ENCODE measurements at regions of chr5 and their contacts with region 1.

Region 1: DNA sequence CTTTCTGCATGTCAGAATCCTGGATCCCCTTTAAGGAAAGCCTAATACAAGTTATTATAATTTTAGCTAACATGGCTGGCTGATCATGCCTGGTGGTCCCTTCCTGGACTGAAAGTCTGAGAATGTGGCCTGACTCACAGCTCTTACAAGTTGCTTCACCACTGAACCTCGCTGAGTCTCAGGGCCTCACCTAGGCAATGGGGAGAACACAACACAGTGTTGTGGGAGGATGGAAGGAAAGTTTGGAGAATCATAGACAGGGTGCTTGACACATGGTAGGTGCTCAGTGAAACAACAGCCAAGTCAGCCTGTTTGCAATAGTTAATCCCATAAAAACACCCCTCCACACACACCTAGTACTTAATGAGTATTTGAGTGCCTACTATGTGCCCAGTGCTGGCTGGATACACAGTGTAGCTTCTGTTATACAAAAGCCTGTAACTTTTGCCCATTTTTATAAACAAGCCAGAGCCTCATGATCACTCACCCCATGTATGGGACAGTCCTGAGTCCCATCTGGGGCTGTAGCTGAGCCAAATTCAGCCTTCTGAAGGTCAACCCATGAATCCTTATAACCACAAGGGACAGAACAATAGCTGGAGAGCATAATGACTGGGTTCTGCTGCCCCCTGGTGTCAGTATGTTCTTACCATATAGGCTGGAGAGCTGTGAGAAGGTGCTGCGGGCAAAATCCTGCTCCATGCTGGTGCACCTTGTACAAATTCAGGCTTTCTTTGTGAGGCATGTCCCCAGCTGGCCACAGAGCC is 3.9 kb downstream of the ACSL6 start:
- DNase-seq: peak; percentile 89 to 92 (median 89)
- ATAC-seq: peak; percentile 56
- H3K4me3 ChIP-seq: no peak overlapping the region
- H3K27ac ChIP-seq: no peak overlapping the region
- H3K4me1 ChIP-seq: peaks cover 20% of the 10 kb centered on the region
- H3K27me3 ChIP-seq: no peaks in the 10 kb centered on the region
- CTCF ChIP-seq: peak; percentile 65 to 88 (median 87)
- POLR2A ChIP-seq: no peak

Region 2: DNA sequence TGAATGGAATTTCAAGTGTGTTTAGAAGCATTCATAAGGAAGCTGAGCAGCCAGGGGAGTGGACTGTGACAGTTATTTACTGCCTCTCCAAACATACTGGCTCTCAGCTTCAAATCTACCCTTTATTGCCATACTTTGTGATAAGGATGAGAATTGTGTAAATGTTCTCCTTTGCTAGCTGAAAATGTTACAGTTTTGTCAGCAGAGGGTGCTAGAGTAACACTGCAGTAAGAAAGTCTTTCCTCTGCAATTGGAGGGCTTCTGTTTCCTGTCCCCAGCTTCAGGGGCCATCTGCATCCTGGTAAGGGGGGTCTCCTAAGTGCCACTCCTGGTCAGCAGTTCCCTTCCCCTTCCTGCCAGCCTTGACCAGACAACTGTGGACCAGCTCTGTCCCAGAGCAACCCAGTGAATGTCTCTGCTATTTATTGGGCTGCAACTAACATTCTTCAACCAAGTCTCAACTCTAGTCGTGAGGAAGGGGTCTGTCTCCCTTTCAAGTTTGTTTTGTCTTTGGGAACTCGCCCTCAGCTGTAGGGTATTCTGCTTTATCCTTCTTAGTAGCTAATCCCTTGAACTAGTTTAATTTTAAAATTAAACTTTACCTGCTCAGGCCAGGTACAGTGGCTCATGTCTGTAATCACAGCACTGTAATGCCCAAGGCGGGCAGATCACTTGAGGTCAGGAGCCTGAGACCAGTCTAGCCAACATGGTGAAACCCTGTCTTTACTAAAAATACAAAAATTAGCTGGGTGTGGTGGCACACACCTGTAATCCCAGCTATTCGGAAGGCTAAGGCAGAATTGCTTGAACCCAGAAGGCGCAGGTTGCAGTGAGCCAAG is 417.9 kb before region 1 on chr5:
- intact Hi-C with region 1: loop called (anchors 5 kb)
- DNase-seq: peak in 1 of 4 donors; percentile 13
- ATAC-seq: peak; percentile 70
- H3K4me3 ChIP-seq: no peak overlapping the region
- H3K27ac ChIP-seq: no peak overlapping the region
- H3K4me1 ChIP-seq: peaks cover 20% of the 10 kb centered on the region
- H3K27me3 ChIP-seq: no peaks in the 10 kb centered on the region
- CTCF ChIP-seq: peak; percentile 56 to 94 (median 90)
- POLR2A ChIP-seq: no peak

Region 3: DNA sequence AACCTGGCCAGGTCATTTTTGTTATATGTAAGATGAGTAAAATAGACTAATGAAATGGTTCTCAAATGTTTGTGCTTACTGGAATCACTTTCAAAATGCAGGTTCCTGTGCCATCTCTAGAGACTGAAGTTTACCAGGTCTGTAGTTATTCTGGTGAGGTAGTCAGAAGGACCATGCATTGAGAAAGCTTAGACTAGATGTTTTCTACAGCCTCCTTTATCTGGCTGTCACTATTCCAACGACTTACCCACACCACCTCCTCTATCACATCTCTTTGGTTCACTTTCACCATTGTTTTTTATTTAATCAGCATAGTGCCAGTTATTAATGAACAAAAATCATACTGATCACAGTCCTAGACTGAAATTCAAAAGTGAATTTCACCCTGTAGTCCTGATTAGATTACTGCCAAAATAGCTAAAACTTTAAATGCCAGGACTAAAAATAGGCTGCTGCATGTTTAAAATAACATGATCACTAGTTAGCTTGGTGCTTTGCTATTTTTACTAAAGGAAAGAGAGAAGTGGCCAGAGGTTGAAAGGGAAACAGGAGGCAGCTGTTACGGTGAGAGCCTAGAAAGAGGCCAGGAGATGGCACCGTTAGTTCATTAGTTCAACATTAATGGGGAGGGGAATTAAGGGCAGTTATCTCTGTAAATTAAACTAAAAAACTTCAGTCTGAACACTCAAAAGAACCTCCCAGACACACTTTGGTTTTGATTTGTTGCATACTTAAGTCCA is 196.9 kb before region 1 on chr5:
- intact Hi-C with region 1: loop called (anchors 10 kb)
- DNase-seq: no peak
- ATAC-seq: no peak
- H3K4me3 ChIP-seq: no peak overlapping the region
- H3K27ac ChIP-seq: no peak overlapping the region
- H3K4me1 ChIP-seq: no peaks in the 10 kb centered on the region
- H3K27me3 ChIP-seq: no peaks in the 10 kb centered on the region
- CTCF ChIP-seq: peak in 3 of 7 experiments; percentile 19 to 30 (median 21)
- POLR2A ChIP-seq: no peak